Breast epithelium (tissue), 4 donors: ENCODE measurements at regions of chr1 and their contacts with region 1.

Region 1: DNA sequence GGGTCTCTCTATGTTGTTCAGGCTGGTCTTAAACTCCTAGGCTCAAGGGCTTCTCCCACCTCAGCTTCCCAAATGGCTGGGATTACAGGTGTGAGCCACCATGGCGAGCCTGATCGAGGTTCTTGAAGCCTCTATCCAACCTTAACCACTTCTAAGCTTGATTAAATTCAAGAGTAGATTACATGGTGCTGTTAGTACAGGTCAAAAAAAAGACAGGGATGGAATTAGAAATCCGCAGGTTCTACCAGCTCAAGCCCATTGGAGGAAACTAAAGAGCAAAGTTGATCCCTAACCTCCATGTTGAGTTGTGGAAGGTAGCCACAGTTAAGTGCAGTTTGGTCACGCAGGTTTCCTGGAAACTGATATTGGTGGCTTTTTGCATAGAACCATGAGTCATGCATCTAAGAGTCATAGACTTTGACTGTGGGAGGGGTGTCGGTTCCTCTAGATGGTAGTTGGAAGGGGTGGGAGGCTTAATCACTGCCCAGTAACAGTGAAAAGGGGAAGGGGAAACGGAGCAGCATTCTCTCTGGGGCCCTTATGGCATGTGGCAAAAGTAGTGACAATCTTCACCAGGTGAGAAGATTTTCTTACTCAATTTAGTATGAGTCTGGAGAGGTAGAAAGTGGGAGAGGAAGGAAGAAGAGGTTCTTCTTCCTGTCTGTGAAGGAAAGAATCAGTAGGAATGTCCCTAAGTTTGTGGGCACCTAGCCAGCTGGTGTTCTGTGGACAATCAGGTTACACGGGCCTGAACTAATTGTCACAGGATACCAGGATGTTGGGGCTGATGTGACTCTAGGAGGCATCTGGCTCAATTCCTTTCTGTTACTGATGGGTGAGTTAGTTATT is 7.0 kb downstream of the CD53 start:
- DNase-seq: no peak
- H3K4me3 ChIP-seq: no peak overlapping the region
- H3K27ac ChIP-seq: no peak overlapping the region
- H3K4me1 ChIP-seq: no peaks in the 10 kb centered on the region
- H3K27me3 ChIP-seq: no peaks in the 10 kb centered on the region
- CTCF ChIP-seq: no peak
- POLR2A ChIP-seq: no peak

Region 2: DNA sequence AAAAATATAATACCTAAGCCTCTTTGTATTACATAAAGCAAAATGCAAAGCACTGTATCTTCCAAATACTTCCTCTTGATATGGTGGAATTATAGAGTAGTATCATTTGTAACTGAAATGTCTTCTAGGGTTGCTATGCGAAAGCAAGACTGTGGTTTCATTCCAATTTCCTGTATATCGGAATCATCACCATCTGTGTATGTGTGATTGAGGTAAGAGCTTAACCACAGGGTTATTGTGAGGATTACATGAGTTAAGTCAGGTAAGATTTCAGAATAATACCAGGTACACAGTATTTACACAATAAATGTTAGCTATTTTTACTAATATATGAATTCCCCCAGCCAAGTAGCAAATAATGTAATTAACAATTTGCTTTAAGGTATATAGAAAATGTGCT is 17.7 kb after region 1 on chr1:
- intact Hi-C with region 1: loop called (anchors 1 kb)
- DNase-seq: no peak
- H3K4me3 ChIP-seq: no peak overlapping the region
- H3K27ac ChIP-seq: no peak overlapping the region
- H3K4me1 ChIP-seq: no peaks in the 10 kb centered on the region
- H3K27me3 ChIP-seq: no peaks in the 10 kb centered on the region
- CTCF ChIP-seq: no peak
- POLR2A ChIP-seq: no peak